ENCODE measurements at regions of chr10 and their contacts with region 1.

Region 1: GRCh38 chr10:47384148-47384921 is at the start of gene ZNF488:
- DNase-seq: peak; percentile 86 to 91 (median 88)
- ATAC-seq: peak; percentile 97
- H3K4me3 ChIP-seq: peak within 1 kb of the TSS; percentile 52 to 76
- H3K27ac ChIP-seq: peak within 1 kb of the TSS in 3 of 4 donors; percentile 67 to 72 (median 69)
- H3K4me1 ChIP-seq: peaks cover 25% of the 10 kb centered on the region
- H3K27me3 ChIP-seq: no peaks in the 10 kb centered on the region
- CTCF ChIP-seq: no peak
- POLR2A ChIP-seq: peak in 2 of 3 donors; percentile 26 to 49
- total RNA-seq, gene ZNF488: 0.26 TPM in 1 of 2 donors, not detected in the other

Region 2: DNA sequence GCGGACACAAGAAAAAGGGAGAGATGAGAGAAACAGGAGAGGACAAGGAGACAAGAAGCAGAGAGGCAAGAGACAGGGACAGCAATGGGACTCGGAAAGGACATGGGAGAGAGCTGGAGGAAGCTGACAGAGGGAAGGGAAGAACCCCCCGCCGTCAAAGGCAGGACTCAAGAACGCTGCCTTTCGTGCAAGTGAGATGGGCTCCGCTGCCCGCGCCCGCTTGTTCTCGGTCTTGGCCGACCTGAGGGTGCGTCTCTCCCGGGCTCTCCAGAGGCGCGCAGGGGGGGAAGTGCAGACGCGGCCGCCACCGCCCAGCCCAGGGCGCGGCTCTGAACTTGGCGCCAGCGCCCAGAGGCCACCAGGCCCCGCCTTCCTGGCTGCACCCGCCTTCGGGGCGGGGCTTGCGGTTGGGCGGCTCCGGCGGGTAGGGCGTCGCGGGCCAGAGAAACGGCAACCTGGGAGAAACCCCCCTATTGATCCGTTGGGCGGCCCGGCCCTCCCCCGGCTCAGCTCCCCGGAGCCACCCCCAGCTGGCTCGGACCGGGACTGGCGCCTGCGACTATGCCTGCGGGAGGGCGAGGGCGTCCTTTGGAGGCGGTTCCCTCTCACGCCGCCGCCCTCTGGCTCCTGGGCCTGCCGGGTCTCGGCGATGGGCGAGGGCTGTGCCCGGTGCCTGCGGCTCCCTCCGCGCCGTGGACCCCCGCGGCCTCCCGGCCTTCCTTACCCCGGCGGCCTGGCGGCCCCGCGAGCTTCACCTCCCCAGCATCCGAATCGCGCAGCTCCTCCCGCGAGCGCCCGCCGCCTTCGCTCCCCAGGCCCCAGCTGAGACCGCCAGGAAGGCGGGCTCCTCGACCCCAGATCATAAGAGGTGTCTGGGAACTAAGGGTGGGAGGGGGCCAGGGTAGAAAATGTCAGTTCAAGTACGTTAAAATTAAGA is 1099.8 kb before region 1 on chr10:
- intact Hi-C with region 1: loop called (anchors 5 kb)
- DNase-seq: peak; percentile 83 to 91 (median 86)
- ATAC-seq: peak; percentile 91
- H3K4me3 ChIP-seq: peak overlapping the region in 1 of 2 donors; percentile 39
- H3K27ac ChIP-seq: peak overlapping the region in 3 of 4 donors; percentile 22 to 52 (median 34)
- H3K4me1 ChIP-seq: peaks cover 27% of the 10 kb centered on the region
- H3K27me3 ChIP-seq: no peaks in the 10 kb centered on the region
- CTCF ChIP-seq: peak in 1 of 7 experiments; percentile 8
- POLR2A ChIP-seq: peak in 2 of 3 donors; percentile 38 to 42

Measured in body of pancreas (tissue), 4 donors.